ENCODE measurements at regions of chr12 and their contacts with region 1.

Region 1: GRCh38 chr12:31353750-31354708 is 28.1 kb upstream of the SINHCAF start:
- DNase-seq: no peak

Region 2: GRCh38 chr12:31265722-31266121 is 88.3 kb before region 1 on chr12:
- intact Hi-C with region 1: no loop called
- DNase-seq: no peak

Region 3: DNA sequence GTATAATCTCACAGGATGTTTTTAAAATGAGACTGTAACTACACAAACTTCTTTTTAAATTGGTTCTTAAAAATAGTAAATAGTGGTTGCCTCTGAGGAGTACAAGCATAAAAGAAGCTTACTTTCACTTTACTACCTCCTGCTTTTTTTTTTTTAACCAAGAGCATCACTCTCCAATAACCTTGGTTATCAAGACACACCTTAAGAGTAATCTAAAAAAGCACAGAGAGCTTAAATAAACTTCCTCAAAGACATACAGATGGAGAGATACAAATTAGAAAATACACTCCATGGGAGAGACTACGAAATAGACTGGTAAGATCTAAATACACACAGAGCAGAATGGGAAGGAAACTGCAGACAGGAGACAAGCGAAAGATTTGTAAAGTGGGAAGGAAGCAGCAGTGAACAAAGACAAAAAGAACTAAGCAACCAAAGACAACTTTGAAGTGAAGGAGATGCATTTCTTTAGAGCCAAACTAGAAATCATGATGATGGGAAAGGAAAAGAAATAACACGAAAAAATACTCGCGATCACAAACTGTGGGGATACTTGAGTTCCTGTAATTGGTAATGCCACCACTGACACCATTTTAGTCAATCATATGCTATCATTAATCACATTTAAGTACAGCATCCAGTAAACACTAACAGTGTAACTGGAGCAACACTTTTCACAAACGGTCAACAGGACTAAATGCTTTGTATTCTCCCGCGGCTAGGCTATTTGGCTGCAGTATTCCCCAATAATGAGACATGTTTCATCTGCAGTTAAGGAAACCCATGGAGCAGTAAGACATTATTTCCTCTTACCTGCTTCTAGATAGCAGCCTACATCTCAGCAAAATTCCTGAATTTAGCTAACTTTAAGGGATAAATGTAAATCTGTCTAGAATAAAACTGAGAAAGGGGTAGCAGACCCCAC is 36.3 kb before region 1 on chr12:
- intact Hi-C with region 1: no loop called
- DNase-seq: no peak

Region 4: DNA sequence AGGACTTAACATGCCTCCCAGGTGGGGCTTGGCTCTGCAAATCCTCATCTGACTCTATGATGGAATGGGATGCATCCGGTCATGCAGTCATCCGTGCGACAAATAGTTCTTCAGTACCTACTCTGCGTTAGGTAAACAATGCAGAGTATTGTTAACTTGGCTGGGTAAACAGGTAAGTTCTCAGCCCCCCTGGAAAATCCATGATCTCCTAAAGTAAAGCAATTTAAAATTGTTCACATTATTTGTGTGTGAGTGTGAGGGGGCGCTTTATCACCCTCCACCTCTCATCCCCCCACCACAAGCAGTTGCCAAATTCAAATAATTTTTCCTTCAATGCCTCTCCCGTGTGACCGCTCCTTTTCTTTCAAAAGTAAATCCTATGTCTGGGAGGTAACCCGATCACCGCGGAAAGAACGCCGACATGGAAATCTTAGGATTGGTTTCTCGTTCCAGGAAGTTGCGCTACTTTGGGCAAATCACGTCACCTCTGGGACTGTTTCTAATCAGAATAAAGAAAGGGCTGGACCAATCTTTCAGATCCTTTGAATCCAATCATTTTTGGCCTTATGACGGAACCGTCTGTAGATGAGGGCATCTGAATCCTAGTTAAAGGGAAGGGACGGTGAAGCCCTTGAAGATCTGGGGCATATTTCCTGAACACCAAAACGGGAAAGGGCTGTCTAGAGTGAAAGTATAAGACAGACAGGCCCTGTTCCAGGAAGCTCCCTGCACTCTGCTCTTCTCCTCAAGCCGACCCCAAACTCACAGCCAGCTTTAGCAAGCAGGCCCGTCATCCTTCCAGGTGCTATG is 15.9 kb after region 1 on chr12:
- intact Hi-C with region 1: no loop called
- DNase-seq: no peak

Region 5: DNA sequence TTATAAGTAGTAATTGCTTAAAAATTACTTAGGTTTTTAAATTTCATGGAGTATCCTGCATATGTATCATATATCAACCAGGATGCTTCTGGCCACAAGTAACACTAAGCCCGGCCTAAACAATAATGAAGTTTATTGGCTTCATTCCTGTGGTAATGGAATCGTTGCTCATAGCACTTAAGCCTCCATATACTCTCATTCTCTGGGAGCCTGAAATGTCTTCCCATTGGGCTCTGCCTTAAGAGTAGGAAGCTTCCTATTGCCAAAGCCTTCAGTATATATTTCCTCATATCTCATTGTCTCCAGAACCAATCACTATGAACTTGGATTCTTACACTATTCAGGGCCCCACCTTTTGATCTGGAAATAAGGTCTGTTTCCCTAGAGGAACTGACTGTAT is 1241.2 kb after region 1 on chr12:
- intact Hi-C with region 1: loop called in 1 of 2 experiments (anchors 10 kb)
- DNase-seq: no peak